ENCODE measurements at regions of chr7 and their contacts with region 1.

Region 1: GRCh38 chr7:17298207-17298839 is at the start of gene AHR:
- DNase-seq: peak; percentile 90 to 98 (median 94)
- H3K4me3 ChIP-seq: peak within 1 kb of the TSS; percentile 58 to 99 (median 89)
- H3K27ac ChIP-seq: peak within 1 kb of the TSS; percentile 76 to 98 (median 94)
- H3K27me3 ChIP-seq: no peaks in the 10 kb centered on the region
- CTCF ChIP-seq: peak in 2 of 56 donors; percentile 5 to 14
- total RNA-seq, gene AHR: 7.8 to 51.4 (median 18.7) TPM

Region 2: GRCh38 chr7:16678045-16678444 is 620.3 kb before region 1 on chr7:
- intact Hi-C with region 1: no loop called
- DNase-seq: no peak
- H3K4me3 ChIP-seq: no peak overlapping the region
- H3K27ac ChIP-seq: no peak overlapping the region
- H3K27me3 ChIP-seq: no peaks in the 10 kb centered on the region
- CTCF ChIP-seq: no peak

Region 3: GRCh38 chr7:17071866-17072265 is 226.5 kb before region 1 on chr7:
- intact Hi-C with region 1: no loop called
- DNase-seq: no peak
- H3K4me3 ChIP-seq: no peak overlapping the region
- H3K27ac ChIP-seq: peak overlapping the region in 1 of 59 donors; percentile 13
- H3K27me3 ChIP-seq: no peaks in the 10 kb centered on the region
- CTCF ChIP-seq: no peak

Region 4: GRCh38 chr7:17144322-17144721 is 154.0 kb before region 1 on chr7:
- intact Hi-C with region 1: loop called in 1 of 2 experiments (anchors 10 kb)
- DNase-seq: no peak
- H3K4me3 ChIP-seq: no peak overlapping the region
- H3K27ac ChIP-seq: no peak overlapping the region
- H3K27me3 ChIP-seq: no peaks in the 10 kb centered on the region
- CTCF ChIP-seq: no peak

Region 5: DNA sequence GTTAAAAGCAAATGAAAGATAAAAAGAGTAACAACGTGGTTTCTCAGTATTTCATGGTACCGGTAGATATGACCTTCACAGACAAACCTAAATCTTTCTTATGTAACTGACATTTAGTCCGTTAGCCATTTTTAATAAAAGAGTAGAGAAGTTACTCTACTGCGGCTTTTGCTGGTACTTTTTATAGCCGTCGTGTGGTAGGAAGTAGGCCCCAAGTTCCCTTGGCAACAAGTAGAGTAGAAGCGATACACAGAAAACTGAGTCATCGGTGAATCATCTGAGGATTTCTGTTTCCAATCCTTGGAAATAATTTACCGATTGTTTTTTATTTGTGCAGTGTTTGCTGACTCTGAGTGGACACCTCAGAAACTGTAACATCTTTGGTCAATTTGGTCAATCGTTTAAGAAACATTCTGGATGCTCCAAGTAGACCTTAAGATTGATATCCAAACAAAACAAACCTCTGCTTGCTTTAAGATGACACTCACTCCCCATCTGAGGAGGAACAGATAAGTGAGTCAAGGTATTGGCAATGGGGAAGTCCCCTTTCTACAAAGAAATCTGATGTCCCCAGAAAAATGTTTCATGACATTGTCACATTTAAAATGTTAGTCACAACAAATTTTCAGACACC is 63.8 kb before region 1 on chr7:
- intact Hi-C with region 1: no loop called
- DNase-seq: peak in 1 of 10 donors; percentile 39
- H3K4me3 ChIP-seq: no peak overlapping the region
- H3K27ac ChIP-seq: peak overlapping the region in 53 of 59 donors; percentile 6 to 88 (median 67)
- H3K27me3 ChIP-seq: no peaks in the 10 kb centered on the region
- CTCF ChIP-seq: no peak

Region 6: DNA sequence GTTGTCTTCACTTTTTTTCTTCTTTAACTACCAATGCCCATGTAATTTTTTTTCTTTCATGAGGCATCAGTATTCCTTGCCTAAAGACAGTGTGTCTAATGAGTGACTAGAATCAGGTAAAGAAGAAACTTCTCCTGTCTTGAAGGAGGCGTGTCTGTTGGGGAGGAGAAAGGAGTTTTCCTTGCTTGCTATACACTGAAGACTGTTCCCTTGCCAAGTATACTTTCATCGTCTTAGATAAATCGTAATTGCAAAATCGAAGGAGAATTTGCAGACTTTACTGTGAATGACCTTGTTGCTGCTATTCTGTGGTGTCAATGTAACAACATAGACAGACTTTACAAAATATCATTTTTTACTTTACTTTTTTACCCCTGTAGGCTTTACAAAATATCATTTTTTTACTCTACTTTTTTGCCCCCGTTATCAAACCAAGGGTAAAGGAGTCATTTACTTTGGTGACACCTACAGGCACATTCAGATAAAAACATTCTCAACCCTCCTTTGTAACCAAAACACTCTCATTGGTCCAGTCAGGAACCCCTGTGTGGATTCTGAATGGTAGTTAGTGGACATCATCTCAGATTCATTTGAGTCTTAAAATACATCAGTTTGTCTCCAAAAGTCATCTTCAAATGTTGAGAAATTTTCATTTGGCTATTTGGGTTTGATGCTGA is 232.6 kb after region 1 on chr7:
- intact Hi-C with region 1: loop called in 1 of 2 experiments (anchors 10 kb)
- DNase-seq: no peak
- H3K4me3 ChIP-seq: no peak overlapping the region
- H3K27ac ChIP-seq: no peak overlapping the region
- H3K27me3 ChIP-seq: peaks cover 0 to 6% (median 0%) of the 10 kb centered on the region in 45 donors
- CTCF ChIP-seq: peak in 44 of 56 donors; percentile 13 to 58 (median 36)